MCF 10A (cell line): ENCODE measurements at regions of chr11 and their contacts with region 1.

Region 1: GRCh38 chr11:27464154-27464759 is 8.3 kb downstream of the LGR4 start:
- DNase-seq: peak; percentile 85
- H3K4me3 Mint-ChIP-seq: peak overlapping the region; percentile 54
- H3K27ac Mint-ChIP-seq: peak overlapping the region; percentile 79
- H3K4me1 Mint-ChIP-seq: peaks cover 43% of the 10 kb centered on the region
- H3K27me3 Mint-ChIP-seq: no peaks in the 10 kb centered on the region
- CTCF ChIP-seq: no peak

Region 2: DNA sequence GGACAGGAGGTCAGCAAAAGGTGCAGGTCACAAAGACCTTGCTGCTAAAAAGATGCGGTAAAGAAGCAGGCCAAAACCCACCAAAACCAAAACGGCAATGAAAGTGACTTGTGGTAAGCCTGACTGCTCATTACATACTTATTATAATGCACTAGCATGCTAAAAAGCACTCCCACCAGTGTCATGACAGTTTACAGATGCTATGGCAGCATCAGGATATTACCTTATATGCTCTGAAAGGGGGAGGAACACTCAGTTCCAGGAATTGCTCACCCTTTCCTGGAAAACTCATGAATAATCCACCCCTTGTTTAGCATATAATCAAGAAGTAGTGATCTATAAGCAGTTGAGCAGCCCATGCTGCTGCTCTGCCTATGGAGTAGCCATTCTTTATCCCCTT is 697.2 kb before region 1 on chr11:
- CTCF ChIA-PET with region 1: no interaction called
- POLR2A ChIA-PET with region 1: no interaction called
- intact Hi-C with region 1: no loop called
- DNase-seq: no peak
- H3K4me3 Mint-ChIP-seq: no peak overlapping the region
- H3K27ac Mint-ChIP-seq: no peak overlapping the region
- H3K4me1 Mint-ChIP-seq: no peaks in the 10 kb centered on the region
- H3K27me3 Mint-ChIP-seq: no peaks in the 10 kb centered on the region
- CTCF ChIP-seq: no peak

Region 3: GRCh38 chr11:27362749-27363575 is 101.3 kb before region 1 on chr11 and contains the start of gene CCDC34:
- CTCF ChIA-PET with region 1: no interaction called
- POLR2A ChIA-PET with region 1: interaction called, 16 read pairs
- intact Hi-C with region 1: no loop called
- DNase-seq: peak; percentile 94
- H3K4me3 Mint-ChIP-seq: peak within 1 kb of the TSS; percentile 93
- H3K27ac Mint-ChIP-seq: peak within 1 kb of the TSS; percentile 93
- H3K4me1 Mint-ChIP-seq: peaks cover 19% of the 10 kb centered on the region
- H3K27me3 Mint-ChIP-seq: no peaks in the 10 kb centered on the region
- CTCF ChIP-seq: no peak
- total RNA-seq, gene CCDC34: 9.0 and 11.1 TPM in 2 replicates

Region 4: DNA sequence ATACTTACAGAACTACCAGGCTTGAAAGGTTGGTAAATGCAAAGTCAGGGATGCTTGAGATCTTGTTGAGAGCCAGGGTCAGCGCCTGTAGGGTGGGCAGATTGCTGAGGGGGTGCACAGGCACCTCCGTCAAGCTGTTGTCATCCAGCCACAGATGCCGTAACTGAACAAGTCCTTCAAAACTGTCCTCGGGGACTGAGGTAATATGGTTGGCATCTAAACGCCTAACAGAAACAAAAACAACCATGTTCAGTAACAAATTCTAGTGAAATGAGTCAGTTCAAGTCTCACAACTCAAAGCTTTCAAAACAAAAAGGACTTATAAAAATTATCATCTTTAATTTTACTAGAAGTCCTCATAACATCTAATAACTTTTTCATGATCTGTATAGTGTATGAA is 79.0 kb before region 1 on chr11:
- CTCF ChIA-PET with region 1: no interaction called
- POLR2A ChIA-PET with region 1: interaction called, 16 read pairs
- intact Hi-C with region 1: no loop called
- DNase-seq: peak; percentile 46
- H3K4me3 Mint-ChIP-seq: peak overlapping the region; percentile 38
- H3K27ac Mint-ChIP-seq: peak overlapping the region; percentile 75
- H3K4me1 Mint-ChIP-seq: peaks cover 9% of the 10 kb centered on the region
- H3K27me3 Mint-ChIP-seq: no peaks in the 10 kb centered on the region
- CTCF ChIP-seq: no peak

Region 5: DNA sequence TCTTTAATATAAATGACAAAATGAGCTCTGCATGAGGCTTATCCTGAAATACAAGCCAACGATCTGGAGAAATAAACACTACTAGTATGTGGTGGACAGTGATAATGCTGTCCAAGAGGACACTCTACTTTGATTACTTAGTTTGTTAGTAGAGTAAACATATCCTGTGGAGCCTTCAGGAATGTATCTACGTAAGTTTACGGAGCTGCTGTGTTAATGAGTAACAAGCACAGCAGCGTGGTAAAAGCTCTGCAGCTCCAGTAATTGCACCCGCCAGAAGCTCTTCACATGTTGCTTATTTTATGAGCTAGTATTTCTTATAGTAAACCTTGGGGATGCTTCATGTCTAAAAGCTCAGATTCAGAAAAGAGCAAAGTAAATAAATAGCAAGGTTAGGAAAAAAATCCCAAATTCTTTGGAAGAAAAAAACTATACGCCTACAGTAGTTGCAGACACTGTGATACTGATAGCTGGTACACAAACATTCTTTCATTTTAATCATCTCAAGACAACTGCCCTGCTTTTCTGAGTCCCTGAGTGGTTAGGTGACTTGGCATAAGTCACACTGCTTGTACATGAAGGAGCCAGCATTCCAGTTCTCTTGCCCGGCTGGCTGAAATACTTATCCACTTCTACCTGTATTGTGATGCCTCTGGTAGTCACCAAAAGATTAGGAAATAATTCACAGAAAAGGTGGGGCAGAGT is 68.5 kb before region 1 on chr11:
- CTCF ChIA-PET with region 1: no interaction called
- POLR2A ChIA-PET with region 1: interaction called, 10 read pairs
- intact Hi-C with region 1: loop called (anchors 5 kb)
- DNase-seq: peak; percentile 23
- H3K4me3 Mint-ChIP-seq: no peak overlapping the region
- H3K27ac Mint-ChIP-seq: peak overlapping the region; percentile 40
- H3K4me1 Mint-ChIP-seq: peaks cover 31% of the 10 kb centered on the region
- H3K27me3 Mint-ChIP-seq: no peaks in the 10 kb centered on the region
- CTCF ChIP-seq: no peak

Region 6: DNA sequence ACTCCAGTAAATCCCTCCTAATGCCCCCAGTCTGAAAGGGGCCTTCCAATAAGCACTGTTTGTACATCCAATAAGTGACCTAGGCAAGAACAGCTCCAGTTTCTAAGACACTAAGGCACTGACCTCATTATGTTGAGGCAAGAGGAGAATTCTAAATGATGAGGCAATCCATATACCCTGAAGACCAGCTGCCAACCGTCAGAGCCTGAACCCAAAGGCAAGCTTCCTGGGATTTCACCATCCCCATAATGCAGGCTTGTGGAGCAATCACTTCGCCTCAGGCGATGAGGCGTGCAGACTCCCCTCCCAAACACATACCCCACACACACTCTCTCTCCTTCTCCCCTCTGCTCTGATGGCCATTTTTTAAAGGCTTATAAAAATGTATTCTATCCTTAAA is 41.1 kb before region 1 on chr11:
- CTCF ChIA-PET with region 1: interaction called, 6 read pairs
- POLR2A ChIA-PET with region 1: interaction called, 92 read pairs
- intact Hi-C with region 1: loop called (anchors 2 kb)
- DNase-seq: peak; percentile 87
- H3K4me3 Mint-ChIP-seq: no peak overlapping the region
- H3K27ac Mint-ChIP-seq: peak overlapping the region; percentile 68
- H3K4me1 Mint-ChIP-seq: peaks cover 51% of the 10 kb centered on the region
- H3K27me3 Mint-ChIP-seq: no peaks in the 10 kb centered on the region
- CTCF ChIP-seq: no peak

Region 7: GRCh38 chr11:27443746-27444507 is 20.3 kb before region 1 on chr11:
- CTCF ChIA-PET with region 1: interaction called, 7 read pairs
- POLR2A ChIA-PET with region 1: interaction called, 32 read pairs
- intact Hi-C with region 1: no loop called
- DNase-seq: no peak
- H3K4me3 Mint-ChIP-seq: no peak overlapping the region
- H3K27ac Mint-ChIP-seq: no peak overlapping the region
- H3K4me1 Mint-ChIP-seq: peaks cover 14% of the 10 kb centered on the region
- H3K27me3 Mint-ChIP-seq: no peaks in the 10 kb centered on the region
- CTCF ChIP-seq: no peak